Dorsolateral prefrontal cortex (tissue), 120 donors: ENCODE measurements at regions of chr17 and their contacts with region 1.

Region 1: DNA sequence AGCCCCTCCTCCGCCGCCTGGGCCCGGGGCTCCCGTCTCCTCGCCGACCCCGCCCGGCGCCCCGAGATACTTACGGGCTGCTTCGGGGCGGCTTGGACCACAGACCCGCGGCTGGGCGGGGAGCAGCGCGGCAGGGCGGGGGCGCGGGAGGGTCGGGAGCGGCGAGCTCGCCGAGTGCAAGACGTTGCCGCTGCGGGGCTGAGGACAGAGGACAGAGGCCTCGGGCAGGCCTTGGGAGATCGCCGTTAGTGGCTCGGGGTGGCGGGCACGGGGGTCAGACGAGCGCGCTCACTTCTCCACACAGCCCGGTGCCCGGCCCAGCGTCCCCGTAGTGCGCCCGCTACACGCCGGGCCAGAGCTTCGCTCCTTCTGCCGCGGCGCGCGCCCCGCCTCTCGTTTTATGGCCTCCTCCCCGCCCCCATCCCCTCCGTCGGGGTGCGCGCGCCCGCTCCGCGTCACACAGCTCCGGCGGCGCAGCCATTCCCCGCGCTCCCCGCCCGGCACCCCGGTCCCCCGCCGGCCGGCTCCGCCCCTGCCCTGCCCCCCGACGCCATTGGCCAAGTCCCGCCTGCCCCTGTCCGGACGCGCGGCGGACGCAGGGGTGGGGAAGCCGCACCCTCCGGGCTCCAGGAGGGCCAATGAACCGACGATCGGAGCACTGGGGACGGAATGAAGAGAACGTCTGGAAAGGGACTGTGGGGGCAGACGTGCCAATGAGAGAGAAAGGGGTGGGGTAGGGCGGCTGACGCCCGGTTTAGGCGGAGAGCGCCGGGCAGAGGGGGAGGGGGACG is at the start of gene TOB1:
- DNase-seq: peak; percentile 93 to 99 (median 98)
- H3K4me3 ChIP-seq: peak within 1 kb of the TSS; percentile 63 to 98 (median 92)
- H3K27ac ChIP-seq: peak within 1 kb of the TSS; percentile 98 to 100 (median 100)
- H3K27me3 ChIP-seq: no peaks in the 10 kb centered on the region
- CTCF ChIP-seq: peak in 9 of 56 donors; percentile 6 to 33 (median 16)
- total RNA-seq, gene TOB1: 41.0 to 97.0 (median 58.6) TPM

Region 2: GRCh38 chr17:50240851-50241250 is 625.3 kb before region 1 on chr17:
- intact Hi-C with region 1: no loop called
- DNase-seq: no peak
- H3K4me3 ChIP-seq: no peak overlapping the region
- H3K27ac ChIP-seq: no peak overlapping the region
- H3K27me3 ChIP-seq: peaks cover 0 to 28% (median 0%) of the 10 kb centered on the region in 45 donors
- CTCF ChIP-seq: no peak

Region 3: DNA sequence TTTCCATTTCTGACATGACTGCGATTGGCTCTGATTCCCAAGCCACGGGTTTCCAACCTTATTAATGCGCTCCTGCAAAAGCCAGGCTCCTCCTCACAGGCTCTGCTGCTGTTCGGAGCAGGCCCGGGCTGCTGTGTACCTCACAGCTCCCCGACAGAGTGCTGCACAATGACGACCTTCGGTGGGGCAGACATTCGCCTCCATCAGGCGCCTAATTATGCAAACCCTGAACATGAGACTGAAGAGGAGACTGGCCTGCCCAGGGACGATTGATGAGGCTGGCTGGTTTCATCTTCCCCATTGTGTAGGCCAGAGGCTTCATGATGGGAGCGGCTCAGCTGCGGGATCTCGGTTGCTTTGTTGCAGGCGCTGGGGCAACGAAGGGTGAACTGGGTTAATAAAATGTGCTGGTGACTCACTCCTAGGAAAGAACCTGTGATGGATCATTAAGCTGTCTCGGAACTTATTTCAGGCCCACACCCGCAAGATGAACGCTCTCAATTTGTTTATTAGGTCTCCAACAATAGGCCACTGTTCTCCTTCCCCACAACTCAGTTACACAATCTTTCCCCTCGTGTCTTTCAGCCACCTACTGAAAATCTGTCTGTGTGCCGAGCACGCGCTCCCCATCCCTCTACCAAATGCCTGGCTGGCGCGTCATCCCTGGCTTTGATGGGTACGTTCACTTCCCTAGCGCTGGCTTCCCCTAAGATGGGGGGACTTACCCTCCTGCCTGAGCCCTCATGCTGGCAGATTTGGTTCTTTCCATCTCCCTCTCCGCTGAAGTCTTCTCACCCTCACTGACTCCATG is 27.2 kb after region 1 on chr17:
- intact Hi-C with region 1: no loop called
- DNase-seq: peak in 8 of 10 donors; percentile 53 to 83 (median 66)
- H3K4me3 ChIP-seq: peak overlapping the region in 23 of 59 donors; percentile 1 to 35 (median 10)
- H3K27ac ChIP-seq: peak overlapping the region; percentile 31 to 97 (median 87)
- H3K27me3 ChIP-seq: no peaks in the 10 kb centered on the region
- CTCF ChIP-seq: peak in 1 of 56 donors; percentile 10

Region 4: DNA sequence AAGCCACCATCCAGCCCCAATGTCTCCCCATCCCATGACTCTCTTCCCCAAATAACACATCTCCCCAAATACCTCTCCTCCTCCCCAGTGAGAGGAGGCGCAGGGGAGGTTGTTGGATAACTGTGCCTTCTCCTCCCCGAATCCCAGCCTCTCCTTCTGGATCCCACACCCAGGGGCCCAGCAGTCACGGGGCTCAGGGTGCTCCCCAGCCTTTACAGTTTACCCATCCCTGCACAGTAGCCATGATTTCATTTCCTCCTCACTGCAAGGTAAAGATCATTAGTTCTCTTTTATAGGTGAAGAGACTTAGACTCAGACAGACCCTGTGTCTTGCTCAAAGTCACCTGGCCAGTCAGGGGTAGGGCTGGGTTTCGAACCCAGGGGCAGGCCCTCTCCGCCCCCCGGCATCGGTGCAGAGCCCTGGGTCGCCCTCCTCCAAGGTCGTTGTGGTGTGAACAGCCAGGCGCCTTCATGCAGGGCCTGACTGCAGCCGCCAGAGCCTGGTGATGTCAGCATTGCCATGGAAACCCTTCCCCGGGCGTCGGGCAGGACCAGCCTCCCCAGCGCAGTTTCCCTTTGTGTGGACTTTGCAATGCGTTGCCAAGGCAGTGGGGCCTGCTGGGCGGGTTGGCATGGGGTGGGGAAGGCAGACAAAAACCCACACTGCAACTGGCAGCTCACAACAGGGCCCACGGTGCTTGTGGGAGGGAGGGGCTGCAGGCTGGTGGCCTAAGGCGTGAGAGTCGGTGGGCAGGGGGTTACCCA is 53.3 kb after region 1 on chr17:
- intact Hi-C with region 1: loop called in 1 of 2 experiments (anchors 1 kb)
- DNase-seq: peak; percentile 89 to 98 (median 98)
- H3K4me3 ChIP-seq: peak overlapping the region in 34 of 59 donors; percentile 2 to 44 (median 22)
- H3K27ac ChIP-seq: peak overlapping the region; percentile 85 to 99 (median 98)
- H3K27me3 ChIP-seq: no peaks in the 10 kb centered on the region
- CTCF ChIP-seq: peak in 30 of 56 donors; percentile 7 to 47 (median 22)

Region 5: GRCh38 chr17:50931144-50931908 is 65.1 kb after region 1 on chr17:
- intact Hi-C with region 1: loop called (anchors 1 kb)
- DNase-seq: peak; percentile 83 to 94 (median 92)
- H3K4me3 ChIP-seq: peak overlapping the region; percentile 25 to 72 (median 53)
- H3K27ac ChIP-seq: peak overlapping the region; percentile 96 to 100 (median 99)
- H3K27me3 ChIP-seq: no peaks in the 10 kb centered on the region
- CTCF ChIP-seq: peak in 10 of 56 donors; percentile 8 to 30 (median 18)

Region 6: GRCh38 chr17:50944054-50944901 is 78.1 kb after region 1 on chr17:
- intact Hi-C with region 1: loop called in 1 of 2 experiments (anchors 2 kb)
- DNase-seq: peak in 9 of 10 donors; percentile 79 to 91 (median 88)
- H3K4me3 ChIP-seq: peak overlapping the region; percentile 37 to 81 (median 65)
- H3K27ac ChIP-seq: peak overlapping the region; percentile 85 to 99 (median 96)
- H3K27me3 ChIP-seq: no peaks in the 10 kb centered on the region
- CTCF ChIP-seq: peak in 19 of 56 donors; percentile 7 to 42 (median 18)

Region 7: GRCh38 chr17:51056813-51057510 is 190.8 kb after region 1 on chr17:
- intact Hi-C with region 1: loop called in 1 of 2 experiments (anchors 10 kb)
- DNase-seq: peak in 2 of 10 donors; percentile 14 to 57
- H3K4me3 ChIP-seq: peak overlapping the region in 13 of 59 donors; percentile 1 to 40 (median 15)
- H3K27ac ChIP-seq: peak overlapping the region in 58 of 59 donors; percentile 4 to 91 (median 73)
- H3K27me3 ChIP-seq: no peaks in the 10 kb centered on the region
- CTCF ChIP-seq: peak; percentile 51 to 88 (median 76)

Region 8: DNA sequence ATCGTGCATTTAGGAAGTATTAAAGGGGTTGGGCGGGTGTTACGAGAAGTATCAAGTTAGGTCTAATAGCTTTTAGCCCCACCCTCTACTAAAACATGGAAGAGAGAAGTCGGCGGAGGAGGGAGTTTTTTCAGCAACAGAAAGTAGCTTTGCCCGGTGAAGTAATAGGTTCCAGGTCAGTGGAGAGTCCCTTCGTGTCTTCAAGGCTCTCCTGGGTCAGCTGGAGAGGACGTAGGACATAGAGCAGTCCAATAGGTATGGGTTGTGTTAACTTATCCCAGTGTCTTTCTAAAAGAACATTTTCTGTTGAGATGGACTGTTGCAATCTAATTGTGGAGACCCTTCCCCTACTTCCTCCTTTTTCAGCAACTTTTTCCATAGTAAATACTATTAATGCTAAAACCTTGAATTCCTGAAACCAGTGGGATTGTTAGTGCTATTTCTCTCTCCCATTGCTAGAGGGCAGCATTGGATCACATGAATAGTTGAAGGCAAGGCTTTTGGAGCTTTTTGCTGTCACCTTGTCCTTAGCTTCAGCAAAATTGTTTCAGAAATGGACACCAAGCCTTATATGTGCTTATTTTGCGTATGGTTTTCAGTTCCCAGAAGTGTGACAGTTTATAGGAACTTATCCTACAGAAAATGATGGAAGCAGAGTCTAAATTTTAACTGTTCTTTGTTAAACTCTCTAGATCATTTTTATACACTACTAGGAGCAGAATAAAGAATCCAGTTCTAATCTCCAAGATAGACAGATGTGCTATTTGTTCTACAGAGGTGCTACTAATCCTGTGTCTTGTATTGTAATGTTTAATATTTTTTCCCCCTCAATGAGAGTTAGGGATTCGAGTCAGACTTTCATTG is 432.6 kb after region 1 on chr17:
- intact Hi-C with region 1: no loop called
- DNase-seq: peak in 1 of 10 donors; percentile 17
- H3K4me3 ChIP-seq: no peak overlapping the region
- H3K27ac ChIP-seq: peak overlapping the region in 23 of 59 donors; percentile 8 to 81 (median 43)
- H3K27me3 ChIP-seq: no peaks in the 10 kb centered on the region
- CTCF ChIP-seq: peak; percentile 43 to 91 (median 74)